AG04449 (cell line): ENCODE measurements at regions of chr22 and their contacts with region 1.

Region 1: DNA sequence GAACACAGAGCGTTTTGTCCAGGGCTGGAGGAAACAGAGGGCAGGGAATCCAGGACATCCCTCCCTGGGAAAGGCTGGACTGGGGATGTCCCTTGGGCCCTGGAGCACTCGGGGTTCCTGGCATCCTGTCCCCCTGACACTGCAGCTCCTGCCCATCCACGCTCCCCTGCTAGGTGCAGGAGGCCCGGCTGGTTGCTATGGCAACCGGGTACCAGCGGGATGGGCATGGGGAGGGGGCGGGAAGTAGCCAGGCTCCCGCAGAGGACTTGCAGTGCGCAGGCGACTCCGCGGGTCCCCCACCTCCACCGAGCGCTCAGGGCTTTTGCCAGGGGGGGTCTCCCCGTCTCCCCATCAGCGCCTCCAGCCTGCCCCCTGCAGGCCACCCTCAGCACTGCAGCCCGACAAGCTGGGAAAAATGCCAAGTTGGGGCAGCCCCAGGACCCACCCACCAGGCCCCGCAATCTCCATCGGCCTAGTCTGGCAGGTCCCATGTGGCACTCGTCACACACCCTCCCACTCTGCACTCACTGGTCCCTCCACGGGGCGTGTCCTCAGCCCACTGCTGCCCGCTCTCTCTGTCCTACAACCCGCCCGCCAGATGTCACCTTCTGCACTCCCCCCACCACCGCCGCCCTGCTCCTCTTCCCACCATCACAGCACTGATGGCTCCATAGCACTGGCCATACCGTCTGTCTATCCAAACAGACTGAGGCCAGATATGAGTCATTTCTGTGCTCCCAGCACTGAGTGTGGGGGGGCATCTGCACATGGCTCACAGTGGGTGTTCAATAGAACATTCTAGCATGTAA is 31.5 kb downstream of the KIAA0930 start:
- DNase-seq: no peak
- H3K4me3 ChIP-seq: no peak overlapping the region
- CTCF ChIP-seq: peak; percentile 78

Region 2: GRCh38 chr22:45064313-45065278 is 144.6 kb before region 1 on chr22:
- CTCF ChIA-PET with region 1: no interaction called
- POLR2A ChIA-PET with region 1: no interaction called
- DNase-seq: peak; percentile 24
- H3K4me3 ChIP-seq: no peak overlapping the region
- CTCF ChIP-seq: no peak

Region 3: GRCh38 chr22:45192701-45193187 is 16.5 kb before region 1 on chr22:
- CTCF ChIA-PET with region 1: interaction called, 10 read pairs
- POLR2A ChIA-PET with region 1: no interaction called
- DNase-seq: no peak
- H3K4me3 ChIP-seq: no peak overlapping the region
- CTCF ChIP-seq: no peak